ENCODE measurements at regions of chr7 and their contacts with region 1.

Region 1: DNA sequence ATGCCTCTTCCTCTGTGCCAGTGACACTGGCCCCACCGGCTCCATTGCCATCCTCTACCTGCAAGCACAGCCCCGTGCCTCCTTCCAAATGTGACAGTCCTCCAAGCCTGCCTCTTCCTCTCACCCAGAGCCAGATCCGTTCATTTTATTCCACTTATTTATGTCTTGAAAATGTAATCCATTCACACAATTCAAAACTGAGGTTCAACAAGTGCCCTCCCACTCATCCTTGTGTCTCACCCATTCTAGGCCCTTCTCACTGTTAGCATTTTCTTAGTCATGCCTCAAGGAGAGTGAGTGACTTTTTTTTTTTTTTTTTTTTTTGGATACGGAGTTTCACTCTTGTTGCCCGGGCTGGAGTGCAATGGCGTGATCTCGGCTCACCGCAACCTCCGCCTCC is 41.7 kb downstream of the FKBP6 start:
- DNase-seq: no peak
- ATAC-seq: no peak
- H3K4me3 ChIP-seq: no peak overlapping the region
- H3K4me3 Mint-ChIP-seq: no peak overlapping the region
- H3K27ac ChIP-seq: no peak overlapping the region
- H3K27ac Mint-ChIP-seq: no peak overlapping the region
- H3K4me1 ChIP-seq: peaks cover 4 to 11% of the 10 kb centered on the region in 2 donors
- H3K4me1 Mint-ChIP-seq: peaks cover 14% of the 10 kb centered on the region
- H3K27me3 ChIP-seq: peaks cover 0 to 3% (median 0%) of the 10 kb centered on the region in 4 experiments
- H3K27me3 Mint-ChIP-seq: peaks cover 8% of the 10 kb centered on the region
- CTCF ChIP-seq: no peak

Region 2: DNA sequence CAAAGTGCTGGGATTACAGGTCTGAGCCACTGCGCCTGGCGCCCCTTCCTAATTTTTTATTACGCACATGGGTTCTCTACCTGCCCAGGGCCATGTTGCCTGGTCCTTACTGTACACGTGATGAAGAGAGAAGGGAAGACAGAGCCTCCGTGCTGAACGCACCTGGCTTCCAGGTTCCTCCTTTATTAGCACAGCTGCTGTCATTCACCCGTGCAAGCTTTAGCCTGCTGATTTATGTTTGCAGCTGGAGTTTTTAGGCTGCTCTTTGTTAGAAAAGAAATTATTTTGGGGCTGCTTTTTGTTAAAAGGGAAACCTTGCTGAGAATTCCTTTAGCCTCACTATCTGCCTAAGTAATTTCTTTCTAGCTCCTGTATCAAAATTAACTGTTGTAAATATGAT is 1374.5 kb before region 1 on chr7:
- CTCF ChIA-PET with region 1: no interaction called
- POLR2A ChIA-PET with region 1: no interaction called
- intact Hi-C with region 1: no loop called
- DNase-seq: no peak
- ATAC-seq: no peak
- H3K4me3 ChIP-seq: no peak overlapping the region
- H3K4me3 Mint-ChIP-seq: no peak overlapping the region
- H3K27ac ChIP-seq: no peak overlapping the region
- H3K27ac Mint-ChIP-seq: no peak overlapping the region
- H3K4me1 ChIP-seq: no peaks in the 10 kb centered on the region
- H3K4me1 Mint-ChIP-seq: no peaks in the 10 kb centered on the region
- H3K27me3 ChIP-seq: no peaks in the 10 kb centered on the region
- H3K27me3 Mint-ChIP-seq: no peaks in the 10 kb centered on the region
- CTCF ChIP-seq: no peak

Region 3: GRCh38 chr7:73382934-73383503 is 13.4 kb after region 1 on chr7:
- CTCF ChIA-PET with region 1: no interaction called
- POLR2A ChIA-PET with region 1: no interaction called
- intact Hi-C with region 1: no loop called
- DNase-seq: no peak
- ATAC-seq: no peak
- H3K4me3 ChIP-seq: no peak overlapping the region
- H3K4me3 Mint-ChIP-seq: no peak overlapping the region
- H3K27ac ChIP-seq: no peak overlapping the region
- H3K27ac Mint-ChIP-seq: no peak overlapping the region
- H3K4me1 ChIP-seq: no peaks in the 10 kb centered on the region
- H3K4me1 Mint-ChIP-seq: no peaks in the 10 kb centered on the region
- H3K27me3 ChIP-seq: peaks cover 0 to 7% (median 4%) of the 10 kb centered on the region in 4 experiments
- H3K27me3 Mint-ChIP-seq: peaks cover 8% of the 10 kb centered on the region
- CTCF ChIP-seq: no peak

Region 4: DNA sequence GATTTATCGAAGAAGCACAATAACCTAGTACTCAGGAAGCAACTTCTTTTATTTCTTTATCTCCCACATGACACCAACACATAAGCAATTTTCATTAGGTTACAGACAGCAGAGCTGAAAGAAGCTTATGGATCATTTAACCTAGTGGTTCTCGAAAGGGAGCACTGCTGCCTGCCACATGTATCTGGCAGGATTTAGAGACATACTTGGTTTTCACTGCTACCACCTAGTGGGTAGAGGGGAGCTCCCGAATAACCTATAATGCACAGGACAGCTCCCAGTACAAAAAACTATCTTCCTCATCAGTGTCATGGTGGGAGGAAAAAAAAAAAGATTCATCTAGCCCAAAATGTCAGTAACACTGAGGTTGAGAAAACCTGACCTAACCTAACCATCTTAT is 98.5 kb after region 1 on chr7:
- CTCF ChIA-PET with region 1: no interaction called
- POLR2A ChIA-PET with region 1: interaction called, 10 read pairs
- intact Hi-C with region 1: no loop called
- DNase-seq: no peak
- ATAC-seq: no peak
- H3K4me3 ChIP-seq: no peak overlapping the region
- H3K4me3 Mint-ChIP-seq: no peak overlapping the region
- H3K27ac ChIP-seq: no peak overlapping the region
- H3K27ac Mint-ChIP-seq: no peak overlapping the region
- H3K4me1 ChIP-seq: no peaks in the 10 kb centered on the region
- H3K4me1 Mint-ChIP-seq: no peaks in the 10 kb centered on the region
- H3K27me3 ChIP-seq: no peaks in the 10 kb centered on the region
- H3K27me3 Mint-ChIP-seq: no peaks in the 10 kb centered on the region
- CTCF ChIP-seq: no peak